Sciatic nerve (tissue), 2 donors: ENCODE measurements at regions of chr6 and their contacts with region 1.

Region 1: DNA sequence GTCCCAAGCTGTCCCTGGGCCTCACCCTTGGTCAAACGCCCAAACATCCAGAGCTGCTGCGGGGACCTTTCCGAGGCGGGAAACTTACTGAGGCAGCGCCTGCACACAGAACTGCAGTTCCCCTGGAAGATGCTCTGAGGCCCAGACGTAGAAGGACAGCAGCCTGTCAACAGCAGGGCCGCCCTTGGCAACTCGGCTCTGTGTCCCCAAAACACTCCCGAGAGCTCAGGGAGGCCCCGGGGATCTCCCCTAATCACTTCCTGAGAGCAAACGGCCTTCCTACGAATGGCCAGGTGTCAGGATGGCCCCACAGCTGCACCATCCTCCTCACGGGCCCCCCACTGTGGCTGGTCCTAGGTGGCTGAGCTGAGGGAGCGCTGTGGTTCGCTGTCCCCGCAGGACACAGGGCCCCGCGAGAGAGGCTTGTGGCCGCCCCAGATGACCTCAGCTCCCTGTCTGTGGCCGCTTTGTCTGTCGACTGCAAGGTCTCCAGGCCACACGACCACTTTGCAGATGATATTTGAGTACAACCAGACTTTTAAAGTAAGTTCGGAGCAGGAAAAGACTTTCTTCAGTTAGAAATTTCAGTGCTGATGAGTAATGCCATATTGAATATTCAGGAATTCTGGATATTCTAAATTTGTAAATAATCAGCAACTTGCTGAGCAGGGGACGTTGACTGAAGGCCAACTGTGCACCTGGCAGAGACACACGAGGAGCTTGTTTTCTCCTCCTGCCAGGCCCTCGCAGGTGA is 46.0 kb downstream of the DLL1 start:
- DNase-seq: no peak
- ATAC-seq: peak; percentile 36

Region 2: DNA sequence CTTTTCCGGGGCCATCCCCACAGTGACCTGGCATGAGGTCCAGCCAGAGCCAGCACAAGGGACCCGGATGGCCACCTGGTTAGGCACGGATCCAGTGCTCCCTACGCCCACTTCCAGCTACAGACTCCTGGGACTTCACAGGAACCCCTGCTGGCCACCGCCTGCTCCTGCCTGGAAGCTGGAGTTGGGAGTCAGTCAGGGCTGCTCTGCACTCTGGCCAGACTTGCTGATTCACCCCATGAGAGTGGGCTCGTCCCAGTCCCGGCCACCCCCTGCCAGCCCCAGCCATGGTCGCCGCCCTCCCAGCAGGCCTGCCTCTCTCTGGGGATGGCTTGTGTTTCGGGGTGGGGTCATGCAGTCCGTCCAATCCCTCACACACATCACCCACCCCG is 79.8 kb before region 1 on chr6:
- intact Hi-C with region 1: no loop called
- DNase-seq: no peak
- ATAC-seq: peak; percentile 33

Region 3: GRCh38 chr6:170200458-170200891 is 44.4 kb before region 1 on chr6:
- intact Hi-C with region 1: loop called (anchors 1 kb)
- DNase-seq: no peak
- ATAC-seq: no peak

Region 4: DNA sequence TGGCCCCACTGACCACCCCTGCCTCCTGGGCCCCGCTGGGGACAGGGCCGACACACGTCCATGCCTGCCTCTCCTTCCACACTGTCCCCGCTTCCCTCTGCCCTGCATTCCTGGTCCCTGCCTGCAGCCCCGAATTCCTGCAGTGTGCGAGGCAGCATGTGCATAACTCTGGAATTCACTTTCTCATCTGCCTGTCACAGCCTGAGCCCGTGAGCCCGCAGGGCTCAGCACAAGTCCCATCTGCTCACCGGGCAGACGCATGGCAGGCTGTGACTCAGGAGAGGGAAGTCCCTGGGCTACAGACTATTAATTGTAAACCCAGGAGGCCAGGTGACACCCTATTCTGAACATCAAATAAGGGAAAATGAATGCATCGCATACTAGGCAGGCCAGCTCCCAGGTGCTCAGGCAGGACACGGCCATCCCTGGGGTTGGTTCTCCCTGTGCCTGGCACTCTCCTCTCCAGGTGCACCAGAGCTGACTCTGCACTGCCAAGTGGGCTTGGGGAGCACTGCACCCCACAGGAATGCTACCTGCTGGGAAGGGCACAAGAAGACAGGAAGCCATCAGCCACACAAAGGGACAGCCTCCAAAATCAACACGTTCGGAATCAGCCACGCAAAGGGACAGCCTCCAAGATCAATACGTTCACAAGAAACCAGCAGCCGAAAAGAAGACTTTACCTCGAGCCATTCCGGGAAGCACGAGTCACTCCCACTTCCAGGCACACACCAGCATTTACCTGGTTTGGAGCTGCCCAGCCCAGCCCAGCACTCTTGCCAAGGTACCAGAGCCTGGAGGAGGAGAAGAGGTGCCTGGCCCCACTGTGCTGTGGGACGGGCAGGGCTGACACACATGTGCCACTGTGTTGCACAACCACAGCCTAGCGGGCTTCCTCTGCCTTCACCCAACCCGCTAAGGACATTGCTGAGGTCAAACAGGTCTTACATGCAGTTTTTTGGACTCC is 19.9 kb before region 1 on chr6:
- intact Hi-C with region 1: no loop called
- DNase-seq: peak; percentile 41
- ATAC-seq: no peak